Posterior cingulate gyrus (tissue), 11 donors: ENCODE measurements at regions of chr5 and their contacts with region 1.

Region 1: DNA sequence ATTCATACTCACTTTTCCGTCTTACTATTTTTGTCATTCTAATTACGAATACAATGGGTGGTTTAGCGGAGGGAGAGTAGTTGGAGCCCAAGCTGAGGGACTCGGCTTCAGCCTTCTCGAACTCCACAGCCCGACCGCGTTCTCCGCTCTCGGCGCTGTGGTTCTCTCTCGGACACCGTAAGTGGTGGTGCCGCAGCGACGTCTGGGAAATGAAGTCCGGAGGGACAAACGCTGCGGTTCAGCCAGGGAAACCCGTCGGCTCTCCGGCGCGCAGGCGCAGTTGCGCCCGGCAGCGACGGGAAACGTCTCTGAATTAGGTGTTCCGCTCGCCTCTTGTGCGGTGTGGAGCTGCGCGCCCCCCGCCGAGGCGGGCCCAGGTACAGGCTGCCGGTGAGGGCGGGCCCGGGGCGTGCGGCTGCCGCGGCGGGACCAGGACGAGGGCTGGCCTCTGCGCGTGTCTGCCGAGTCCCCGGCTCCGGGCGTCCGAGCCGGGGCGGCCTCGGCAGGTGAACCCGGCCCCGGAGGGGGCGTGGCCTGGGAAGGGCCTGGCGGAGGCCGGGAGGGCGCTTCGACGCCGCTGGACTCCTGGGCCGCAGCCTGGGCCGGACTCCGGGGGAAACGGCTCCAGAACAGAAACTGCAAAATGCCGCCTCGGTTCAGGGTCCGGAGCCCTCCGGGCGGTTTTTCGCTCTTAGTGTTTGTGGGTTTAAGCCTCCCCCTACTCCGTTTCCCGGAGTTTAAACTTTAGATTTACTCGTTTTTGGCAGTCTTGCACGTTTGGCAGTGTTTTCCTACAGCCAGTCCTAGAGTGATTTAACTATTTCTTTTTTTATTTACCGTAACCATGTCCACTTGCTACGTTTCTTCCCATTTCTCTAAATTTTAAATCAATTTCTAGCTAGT is at the start of gene ZNF879:
- DNase-seq: peak; percentile 91 to 99 (median 96)

Region 2: GRCh38 chr5:179060116-179061008 is 36.6 kb after region 1 on chr5 and contains the start of gene ZNF354C:
- intact Hi-C with region 1: loop called (anchors 1 kb)
- DNase-seq: peak; percentile 78 to 98 (median 87)